ENCODE measurements at regions of chr16 and their contacts with region 1.

Region 1: DNA sequence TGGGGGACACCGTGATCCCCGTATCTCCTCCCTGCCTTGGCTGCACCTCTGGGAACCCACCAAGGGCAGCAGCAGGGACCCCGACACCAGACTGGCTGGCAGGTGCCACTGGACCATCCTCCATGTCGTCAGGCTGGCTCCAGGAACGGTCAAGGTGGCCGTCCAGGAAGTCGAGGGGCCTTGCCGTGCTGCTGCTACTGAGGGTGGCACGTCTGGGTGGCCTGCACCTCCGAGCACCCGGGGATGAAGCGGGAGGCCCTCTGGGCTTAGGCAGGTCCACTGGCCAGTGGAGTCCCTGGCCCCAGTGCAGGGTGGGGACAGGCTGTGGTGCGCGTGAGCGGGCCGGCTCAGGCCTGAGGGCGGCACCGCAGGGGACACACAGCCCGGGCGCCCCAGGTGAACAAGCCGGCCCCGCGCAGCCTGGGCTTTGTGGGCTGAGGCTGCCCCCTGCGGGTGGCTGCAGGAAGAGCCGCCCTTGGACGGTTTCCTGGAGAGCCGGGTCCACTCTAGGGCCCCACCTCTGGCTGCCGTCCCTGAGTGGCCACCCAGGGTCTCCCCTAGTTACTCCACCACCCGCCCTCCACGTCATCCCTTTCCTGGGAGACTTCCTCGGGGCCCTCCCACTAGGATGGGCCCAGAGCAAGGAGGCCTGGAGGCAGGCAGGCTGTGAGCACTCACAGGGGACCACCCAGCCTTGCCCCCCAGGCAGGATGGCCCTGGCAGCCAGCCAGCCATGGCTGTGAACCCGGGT is 42.8 kb upstream of the ZC3H18 start:
- DNase-seq: peak; percentile 72
- H3K4me3 ChIP-seq: no peak overlapping the region
- H3K27ac ChIP-seq: no peak overlapping the region
- H3K4me1 ChIP-seq: peaks cover 16% of the 10 kb centered on the region
- H3K27me3 ChIP-seq: no peaks in the 10 kb centered on the region
- CTCF ChIP-seq: peak; percentile 85

Region 2: DNA sequence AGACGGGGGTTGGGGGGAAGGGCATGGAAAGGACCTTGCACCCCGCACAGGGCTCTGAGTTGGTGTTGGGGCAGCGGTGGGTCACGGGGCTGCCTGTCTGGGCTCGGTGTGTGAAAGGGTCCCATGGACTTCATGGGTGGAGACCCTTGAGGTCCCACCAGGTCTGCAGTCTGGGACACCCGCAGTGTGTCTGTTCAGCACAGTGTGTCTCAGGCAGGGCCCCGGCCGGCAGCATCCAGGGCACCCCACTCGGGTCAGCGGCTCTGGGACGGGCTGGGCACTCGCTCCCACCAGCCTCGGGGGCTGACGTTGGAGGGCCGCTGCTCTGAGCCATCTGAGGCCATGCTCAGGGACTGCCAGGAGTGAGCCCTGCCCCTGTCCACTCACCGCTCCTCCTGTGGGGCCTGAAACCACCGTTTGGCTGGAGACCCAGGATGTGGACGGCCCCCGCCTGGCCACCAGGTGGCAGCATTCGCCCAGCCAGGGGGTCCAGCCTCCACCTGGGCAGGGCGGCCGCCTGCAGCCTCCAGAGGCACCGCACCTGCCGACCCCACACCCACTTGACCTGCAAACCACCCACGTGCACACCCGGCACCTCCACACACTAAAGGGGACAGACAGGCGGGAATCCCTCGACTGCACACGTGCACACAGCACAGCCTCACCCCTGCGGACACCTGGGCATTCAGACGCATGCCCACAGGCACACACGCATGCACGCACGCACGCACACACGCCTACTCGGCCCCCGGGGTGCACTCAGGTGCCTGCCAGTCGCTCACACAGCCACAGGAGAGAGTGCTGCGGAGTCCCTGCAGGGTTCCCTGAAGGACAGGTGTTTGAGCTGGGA is 84.4 kb before region 1 on chr16:
- intact Hi-C with region 1: loop called (anchors 2 kb)
- DNase-seq: peak; percentile 84
- H3K4me3 ChIP-seq: no peak overlapping the region
- H3K27ac ChIP-seq: no peak overlapping the region
- H3K4me1 ChIP-seq: no peaks in the 10 kb centered on the region
- H3K27me3 ChIP-seq: no peaks in the 10 kb centered on the region
- CTCF ChIP-seq: peak; percentile 89